Naive thymus-derived CD4-positive, alpha-beta T cell (primary cell): ENCODE measurements at regions of chr1 and their contacts with region 1.

Region 1: DNA sequence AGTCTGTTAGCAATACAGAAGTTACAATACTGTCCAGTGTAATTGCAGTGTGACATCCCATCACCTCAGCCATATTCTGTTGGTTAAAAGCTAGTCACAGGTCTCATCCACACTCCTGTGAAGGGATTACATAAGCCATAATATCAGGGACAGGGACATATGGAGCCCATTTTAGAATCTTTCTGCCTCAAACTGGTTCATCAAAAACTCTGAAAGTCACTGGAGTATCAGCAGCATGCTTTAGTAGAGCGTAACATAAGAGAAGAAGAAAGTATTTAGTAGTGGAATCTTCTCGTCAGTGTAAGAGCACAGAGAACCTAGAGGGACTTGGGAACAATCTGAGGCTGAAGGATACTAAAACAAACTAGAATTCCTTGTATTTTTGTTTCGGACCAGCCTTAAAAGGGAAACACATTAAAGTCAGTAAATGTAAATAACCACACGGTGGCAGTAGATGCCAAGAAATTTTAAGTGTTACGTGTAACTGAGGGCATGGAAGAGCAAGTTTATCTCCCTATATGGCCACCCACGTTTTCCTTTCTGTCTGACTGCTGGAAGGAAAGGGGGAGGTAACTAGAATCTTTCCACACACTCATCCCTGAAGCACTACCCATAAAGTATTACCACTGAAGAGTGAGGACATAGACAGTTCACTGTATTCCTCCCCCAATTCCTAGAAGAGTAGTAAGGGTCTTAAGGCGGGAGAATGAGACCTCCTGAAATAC is 41.6 kb upstream of the AGL start:
- DNase-seq: peak in 7 of 9 donors; percentile 32 to 63 (median 55)
- ATAC-seq: peak; percentile 81
- H3K4me3 ChIP-seq: no peak overlapping the region
- H3K4me3 Mint-ChIP-seq: peak overlapping the region in 1 of 10 donors; percentile 16
- H3K27ac ChIP-seq: no peak overlapping the region
- H3K27ac Mint-ChIP-seq: no peak overlapping the region
- H3K4me1 ChIP-seq: no peaks in the 10 kb centered on the region
- H3K4me1 Mint-ChIP-seq: peaks cover 0 to 11% (median 4%) of the 10 kb centered on the region in 7 donors
- H3K27me3 ChIP-seq: no peaks in the 10 kb centered on the region
- H3K27me3 Mint-ChIP-seq: peaks cover 6 to 21% (median 8%) of the 10 kb centered on the region in 5 donors

Region 2: GRCh38 chr1:99849744-99850458 is 41.3 kb after region 1 on chr1 and contains the start of gene AGL:
- CTCF ChIA-PET with region 1: no interaction called
- POLR2A ChIA-PET with region 1: no interaction called
- intact Hi-C with region 1: loop called in 1 of 2 experiments (anchors 2 kb)
- DNase-seq: peak; percentile 76 to 88 (median 86)
- ATAC-seq: peak; percentile 97
- H3K4me3 ChIP-seq: peak within 1 kb of the TSS; percentile 81
- H3K4me3 Mint-ChIP-seq: peak within 1 kb of the TSS; percentile 89 to 99 (median 96)
- H3K27ac ChIP-seq: peak within 1 kb of the TSS; percentile 75
- H3K27ac Mint-ChIP-seq: peak within 1 kb of the TSS; percentile 86 to 98 (median 96)
- H3K4me1 ChIP-seq: peaks cover 7 to 10% of the 10 kb centered on the region in 2 donors
- H3K4me1 Mint-ChIP-seq: peaks cover 20 to 42% (median 37%) of the 10 kb centered on the region in 7 donors
- H3K27me3 ChIP-seq: no peaks in the 10 kb centered on the region
- H3K27me3 Mint-ChIP-seq: no peaks in the 10 kb centered on the region
- total RNA-seq, gene AGL: 11.5 to 20.1 (median 12.5) TPM

Region 3: DNA sequence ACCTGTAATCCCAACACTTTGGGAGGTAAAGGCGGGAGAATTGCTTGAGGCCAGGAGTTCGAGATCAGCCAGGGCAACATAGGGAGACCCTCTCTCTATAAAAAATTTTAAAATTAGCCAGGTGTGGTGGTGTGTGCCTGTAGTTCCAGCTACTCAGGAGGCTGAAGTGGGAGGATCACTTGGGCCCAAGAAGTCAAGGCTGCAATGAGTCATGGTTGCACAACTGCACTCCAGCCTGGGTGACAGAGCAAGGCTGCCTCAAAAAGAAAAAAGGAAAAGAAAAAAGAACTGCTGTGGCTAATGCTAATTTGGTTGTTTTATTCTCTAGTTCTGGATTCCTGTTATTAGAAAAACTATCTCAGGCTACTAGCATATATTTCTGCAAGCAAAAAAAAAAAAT is 411.3 kb after region 1 on chr1:
- CTCF ChIA-PET with region 1: no interaction called
- POLR2A ChIA-PET with region 1: no interaction called
- intact Hi-C with region 1: loop called in 1 of 2 experiments (anchors 5 kb)
- DNase-seq: no peak
- ATAC-seq: no peak
- H3K4me3 ChIP-seq: no peak overlapping the region
- H3K4me3 Mint-ChIP-seq: no peak overlapping the region
- H3K27ac ChIP-seq: no peak overlapping the region
- H3K27ac Mint-ChIP-seq: peak overlapping the region in 3 of 9 donors; percentile 12 to 70 (median 52)
- H3K4me1 ChIP-seq: no peaks in the 10 kb centered on the region
- H3K4me1 Mint-ChIP-seq: peaks cover 0 to 16% (median 5%) of the 10 kb centered on the region in 7 donors
- H3K27me3 ChIP-seq: no peaks in the 10 kb centered on the region
- H3K27me3 Mint-ChIP-seq: no peaks in the 10 kb centered on the region

Region 4: DNA sequence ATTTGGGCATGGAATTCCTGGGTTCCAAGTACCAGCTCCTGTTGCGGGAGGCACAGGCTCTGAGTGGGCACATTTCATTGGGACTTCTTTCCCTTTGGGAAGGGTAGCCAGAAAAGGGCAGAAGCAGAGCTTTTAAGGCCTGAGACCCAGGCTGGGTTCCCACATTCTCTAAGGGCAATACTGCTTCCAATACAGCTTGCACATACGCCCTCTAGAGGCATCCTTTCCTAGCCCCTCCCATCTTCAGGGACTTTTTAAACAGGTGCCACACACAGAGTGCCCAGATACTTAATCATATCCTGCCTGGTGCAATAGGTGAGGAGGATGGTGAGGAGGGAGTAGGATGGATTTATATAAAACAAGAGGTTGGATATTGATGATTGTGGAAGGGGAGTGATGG is 735.1 kb after region 1 on chr1:
- CTCF ChIA-PET with region 1: no interaction called
- POLR2A ChIA-PET with region 1: no interaction called
- intact Hi-C with region 1: loop called (anchors 5 kb)
- DNase-seq: peak in 5 of 9 donors; percentile 17 to 39 (median 25)
- ATAC-seq: peak; percentile 76
- H3K4me3 ChIP-seq: no peak overlapping the region
- H3K4me3 Mint-ChIP-seq: no peak overlapping the region
- H3K27ac ChIP-seq: no peak overlapping the region
- H3K27ac Mint-ChIP-seq: no peak overlapping the region
- H3K4me1 ChIP-seq: peaks cover 4% of the 10 kb centered on the region in 2 donors
- H3K4me1 Mint-ChIP-seq: peaks cover 0 to 12% (median 7%) of the 10 kb centered on the region in 7 donors
- H3K27me3 ChIP-seq: peaks cover 4 to 7% of the 10 kb centered on the region in 2 donors
- H3K27me3 Mint-ChIP-seq: peaks cover 23 to 54% (median 30%) of the 10 kb centered on the region in 5 donors

Region 5: GRCh38 chr1:101357444-101357986 is 1549.0 kb after region 1 on chr1:
- CTCF ChIA-PET with region 1: no interaction called
- POLR2A ChIA-PET with region 1: no interaction called
- intact Hi-C with region 1: loop called in 1 of 2 experiments (anchors 5 kb)
- DNase-seq: peak; percentile 26 to 90 (median 85)
- ATAC-seq: peak; percentile 100
- H3K4me3 ChIP-seq: no peak overlapping the region
- H3K4me3 Mint-ChIP-seq: peak overlapping the region in 3 of 10 donors; percentile 1 to 84 (median 60)
- H3K27ac ChIP-seq: no peak overlapping the region
- H3K27ac Mint-ChIP-seq: peak overlapping the region in 8 of 9 donors; percentile 42 to 97 (median 80)
- H3K4me1 ChIP-seq: peaks cover 6 to 7% of the 10 kb centered on the region in 2 donors
- H3K4me1 Mint-ChIP-seq: peaks cover 5 to 12% (median 9%) of the 10 kb centered on the region in 7 donors
- H3K27me3 ChIP-seq: no peaks in the 10 kb centered on the region
- H3K27me3 Mint-ChIP-seq: peaks cover 0 to 19% (median 0%) of the 10 kb centered on the region in 5 donors